ENCODE measurements at regions of chr19 and their contacts with region 1.

Region 1: GRCh38 chr19:43754503-43755255 is at the start of gene SMG9:
- DNase-seq: peak; percentile 98 to 99 (median 99)
- H3K4me3 ChIP-seq: peak within 1 kb of the TSS; percentile 42
- H3K27ac ChIP-seq: peak within 1 kb of the TSS; percentile 96 to 98
- H3K4me1 ChIP-seq: peaks cover 1% of the 10 kb centered on the region
- H3K27me3 ChIP-seq: no peaks in the 10 kb centered on the region
- CTCF ChIP-seq: peak in 1 of 3 donors; percentile 27
- EP300 ChIP-seq: no peak
- POLR2A ChIP-seq: peak; percentile 85
- total RNA-seq, gene SMG9: 13.9 to 34.8 (median 24.2) TPM

Region 2: GRCh38 chr19:43804432-43804831 is 49.8 kb after region 1 on chr19:
- intact Hi-C with region 1: no loop called
- DNase-seq: no peak
- H3K4me3 ChIP-seq: no peak overlapping the region
- H3K27ac ChIP-seq: no peak overlapping the region
- H3K4me1 ChIP-seq: no peaks in the 10 kb centered on the region
- H3K27me3 ChIP-seq: no peaks in the 10 kb centered on the region
- CTCF ChIP-seq: no peak
- EP300 ChIP-seq: no peak
- POLR2A ChIP-seq: no peak

Region 3: GRCh38 chr19:43883864-43884263 is 129.2 kb after region 1 on chr19:
- intact Hi-C with region 1: no loop called
- DNase-seq: no peak
- H3K4me3 ChIP-seq: no peak within 1 kb of the TSS
- H3K27ac ChIP-seq: no peak within 1 kb of the TSS
- H3K4me1 ChIP-seq: no peaks in the 10 kb centered on the region
- H3K27me3 ChIP-seq: no peaks in the 10 kb centered on the region
- CTCF ChIP-seq: no peak
- EP300 ChIP-seq: no peak
- POLR2A ChIP-seq: no peak

Region 4: DNA sequence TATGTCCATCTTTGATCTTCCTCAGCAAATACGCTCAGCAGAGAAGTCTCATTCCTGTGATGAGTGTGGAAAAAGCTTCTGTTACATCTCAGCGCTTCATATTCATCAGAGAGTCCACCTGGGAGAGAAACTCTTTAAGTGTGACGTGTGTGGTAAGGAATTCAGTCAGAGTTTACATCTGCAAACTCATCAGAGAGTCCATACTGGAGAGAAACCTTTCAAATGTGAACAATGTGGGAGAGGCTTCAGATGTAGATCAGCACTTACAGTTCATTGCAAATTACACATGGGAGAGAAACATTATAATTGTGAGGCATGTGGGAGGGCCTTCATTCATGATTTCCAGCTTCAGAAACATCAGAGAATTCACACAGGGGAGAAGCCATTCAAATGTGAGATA is 311.6 kb after region 1 on chr19:
- intact Hi-C with region 1: no loop called
- DNase-seq: no peak
- H3K4me3 ChIP-seq: no peak overlapping the region
- H3K27ac ChIP-seq: no peak overlapping the region
- H3K4me1 ChIP-seq: no peaks in the 10 kb centered on the region
- H3K27me3 ChIP-seq: no peaks in the 10 kb centered on the region
- CTCF ChIP-seq: no peak
- EP300 ChIP-seq: no peak
- POLR2A ChIP-seq: no peak

Region 5: DNA sequence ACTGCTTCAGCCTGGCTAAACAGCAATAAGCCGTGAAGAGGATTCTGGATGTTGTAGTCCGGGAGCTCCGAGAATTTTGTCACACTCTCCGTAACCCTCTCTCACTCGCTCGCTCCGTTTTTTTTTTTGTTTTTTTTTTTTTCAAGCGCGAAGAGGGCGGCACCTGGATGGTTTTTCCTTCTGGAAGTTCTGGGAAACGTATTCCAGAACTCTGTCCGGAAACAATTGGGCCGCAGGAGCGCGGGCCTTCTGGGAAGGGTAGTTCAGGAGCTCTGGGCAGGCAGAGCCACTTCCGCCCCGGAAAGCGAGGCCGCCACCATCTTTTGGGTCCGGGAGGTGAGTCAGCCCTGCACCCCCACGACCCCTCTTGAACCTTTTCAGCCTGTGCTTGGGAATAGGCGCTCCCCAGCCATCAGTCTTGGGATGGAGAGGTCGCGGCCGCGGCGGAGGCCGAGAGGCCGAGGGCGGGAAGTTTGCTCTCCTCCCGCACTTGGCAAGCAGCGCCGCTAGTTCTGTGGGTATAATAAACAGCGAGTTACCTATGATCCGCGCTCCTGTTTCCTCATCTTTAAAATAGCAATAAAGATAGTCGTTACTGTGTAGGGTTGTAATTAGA is 457.7 kb after region 1 on chr19 and contains the start of gene ZNF227:
- intact Hi-C with region 1: loop called in 1 of 4 experiments (anchors 5 kb)
- DNase-seq: peak; percentile 91 to 93 (median 92)
- H3K4me3 ChIP-seq: peak within 1 kb of the TSS; percentile 89
- H3K27ac ChIP-seq: peak within 1 kb of the TSS in 1 of 2 donors; percentile 59
- H3K4me1 ChIP-seq: no peaks in the 10 kb centered on the region
- H3K27me3 ChIP-seq: no peaks in the 10 kb centered on the region
- CTCF ChIP-seq: no peak
- EP300 ChIP-seq: no peak
- POLR2A ChIP-seq: peak; percentile 27
- total RNA-seq, gene ZNF227: 7.3 to 29.5 (median 24.8) TPM